Adrenal gland (tissue), 19 donors: ENCODE measurements at regions of chr3 and their contacts with region 1.

Region 1: DNA sequence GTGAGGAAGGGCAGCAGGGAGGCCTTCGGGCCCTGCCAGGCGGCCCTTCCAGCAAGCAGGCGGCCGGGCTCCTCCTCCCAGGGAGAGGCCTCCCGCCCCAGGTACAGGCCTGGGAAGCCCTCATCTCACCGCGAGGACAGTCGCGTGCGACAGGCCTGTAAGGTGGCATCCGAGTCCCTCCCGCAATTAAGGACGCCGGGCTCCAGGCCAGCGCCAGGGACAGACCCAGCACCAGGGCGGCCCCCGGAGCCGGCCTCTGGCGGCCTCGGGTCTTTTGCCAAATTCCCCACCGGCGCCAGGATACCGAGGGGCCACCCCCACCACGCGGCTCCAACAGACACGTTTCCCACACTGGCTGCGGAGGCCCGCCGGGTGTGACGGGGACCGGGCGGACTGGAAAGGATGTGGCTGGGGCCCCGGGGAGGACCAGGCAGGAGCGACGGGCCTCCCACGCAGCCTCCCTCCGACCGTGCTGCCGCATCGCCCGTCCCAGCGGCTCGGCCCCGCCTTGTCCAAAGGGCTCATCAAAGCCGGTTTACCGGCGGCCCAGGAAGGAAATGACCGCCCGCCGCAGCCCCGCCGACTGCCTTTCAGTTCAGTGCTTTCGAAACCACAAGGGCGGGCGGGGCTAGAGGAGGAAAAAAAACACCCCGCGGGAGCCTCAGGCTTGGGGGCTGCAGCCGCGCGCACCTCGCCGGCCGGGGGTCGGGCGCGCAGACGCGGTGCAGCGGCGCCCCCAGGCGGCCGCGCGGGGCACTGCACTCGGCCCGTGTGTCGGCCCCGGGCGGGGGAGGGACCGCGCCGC is 11.3 kb downstream of the XXYLT1 start:
- DNase-seq: peak; percentile 84 to 95 (median 89)
- H3K4me3 ChIP-seq: peak overlapping the region in 3 of 4 donors; percentile 23 to 76 (median 71)
- H3K27ac ChIP-seq: peak overlapping the region; percentile 52 to 93 (median 66)
- H3K4me1 ChIP-seq: peaks cover 9 to 24% of the 10 kb centered on the region in 2 donors
- H3K27me3 ChIP-seq: no peaks in the 10 kb centered on the region
- CTCF ChIP-seq: peak in 4 of 6 experiments; percentile 21 to 100 (median 92)
- POLR2A ChIP-seq: peak; percentile 31 to 66

Region 2: GRCh38 chr3:194675680-194676079 is 584.0 kb before region 1 on chr3:
- intact Hi-C with region 1: loop called in 1 of 2 experiments (anchors 2 kb)
- DNase-seq: no peak
- H3K4me3 ChIP-seq: no peak overlapping the region
- H3K27ac ChIP-seq: no peak overlapping the region
- H3K4me1 ChIP-seq: peaks cover 3 to 11% of the 10 kb centered on the region in 2 donors
- H3K27me3 ChIP-seq: no peaks in the 10 kb centered on the region
- CTCF ChIP-seq: no peak
- POLR2A ChIP-seq: no peak

Region 3: GRCh38 chr3:195117978-195118581 is 141.6 kb before region 1 on chr3:
- intact Hi-C with region 1: loop called in 1 of 2 experiments (anchors 10 kb)
- DNase-seq: peak in 2 of 7 donors; percentile 47 to 66
- H3K4me3 ChIP-seq: no peak overlapping the region
- H3K27ac ChIP-seq: peak overlapping the region in 1 of 5 donors; percentile 65
- H3K4me1 ChIP-seq: peaks cover 0 to 3% of the 10 kb centered on the region in 2 donors
- H3K27me3 ChIP-seq: no peaks in the 10 kb centered on the region
- CTCF ChIP-seq: peak in 4 of 6 experiments; percentile 12 to 30 (median 20)
- POLR2A ChIP-seq: no peak

Region 4: DNA sequence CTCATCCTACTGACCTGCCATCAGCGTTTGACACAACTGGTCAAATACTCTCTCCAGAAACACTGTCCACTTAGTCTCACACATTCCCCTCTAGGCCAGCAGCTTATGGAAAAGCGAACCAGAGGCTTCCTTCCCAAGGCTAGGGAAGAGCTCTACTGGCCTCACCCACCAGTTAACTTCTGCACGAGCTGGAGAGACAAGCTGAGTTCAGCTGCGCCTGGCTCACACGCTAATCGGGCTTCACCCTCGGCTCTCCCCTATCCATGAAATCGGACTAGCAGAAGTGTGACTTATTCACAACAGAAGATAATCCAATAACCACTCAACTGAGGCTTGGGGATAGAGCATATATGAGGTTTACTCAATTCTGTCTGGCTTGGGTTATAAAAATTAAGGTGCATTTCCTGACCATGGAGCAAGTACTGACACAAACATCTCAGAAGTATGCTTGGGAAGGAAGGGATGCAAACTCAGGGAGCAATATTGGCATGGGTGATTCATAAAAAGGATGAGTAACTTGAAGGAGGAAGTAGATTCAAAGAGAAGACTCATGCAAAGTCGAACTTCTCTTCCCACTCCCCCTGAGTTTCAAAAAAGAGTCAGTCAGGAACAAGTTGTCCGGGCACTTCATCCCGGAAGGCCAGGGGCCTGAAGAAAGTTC is 61.8 kb before region 1 on chr3:
- intact Hi-C with region 1: no loop called
- DNase-seq: peak in 4 of 7 donors; percentile 2 to 39 (median 8)
- H3K4me3 ChIP-seq: no peak overlapping the region
- H3K27ac ChIP-seq: no peak overlapping the region
- H3K4me1 ChIP-seq: peaks cover 0 to 28% of the 10 kb centered on the region in 2 donors
- H3K27me3 ChIP-seq: no peaks in the 10 kb centered on the region
- CTCF ChIP-seq: no peak
- POLR2A ChIP-seq: no peak